ENCODE measurements at regions of chr11 and their contacts with region 1.

Region 1: DNA sequence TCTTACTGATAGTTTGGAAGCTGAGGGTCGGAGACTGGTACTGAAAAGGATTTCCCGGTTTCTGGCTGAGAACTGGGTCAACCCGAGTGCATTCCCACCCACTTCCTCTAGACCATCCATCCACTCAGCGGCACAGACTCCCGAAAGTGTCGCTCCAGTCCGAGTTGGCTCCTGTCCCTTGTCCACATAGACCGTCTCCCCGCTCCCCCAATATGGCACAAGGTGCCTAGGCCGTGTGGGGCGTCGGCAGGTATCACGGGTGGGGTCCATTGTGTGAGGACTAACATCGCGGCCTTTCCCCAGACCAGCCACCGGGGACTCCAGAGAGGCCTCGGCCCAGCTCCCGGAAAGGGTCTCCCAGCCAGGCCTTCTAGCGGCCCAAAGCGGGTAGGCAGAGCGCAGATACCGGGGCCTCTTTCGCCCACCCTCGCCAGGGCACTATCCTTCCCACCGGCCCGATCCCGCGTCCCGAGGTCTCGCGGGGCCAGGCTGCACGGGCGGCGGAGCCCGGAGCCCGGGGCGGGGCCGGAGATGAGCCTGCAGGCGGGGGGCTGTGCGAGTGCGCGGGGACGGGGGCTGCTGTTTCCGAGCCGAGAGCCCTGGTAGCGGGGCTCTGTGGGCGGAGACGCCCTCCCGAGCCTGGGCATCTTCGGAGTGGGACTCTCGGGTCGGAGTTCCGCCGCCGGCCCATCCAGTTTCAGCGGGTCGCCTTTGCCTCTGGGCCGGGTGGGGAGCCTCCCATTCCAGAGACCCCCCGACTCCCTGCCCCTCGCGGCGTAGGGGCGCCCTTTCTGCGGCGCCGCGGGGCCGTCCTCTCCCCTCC is 21.1 kb downstream of the SERPINH1 start:
- DNase-seq: peak; percentile 90 to 93
- H3K4me3 ChIP-seq: peak overlapping the region; percentile 75
- H3K4me3 Mint-ChIP-seq: peak overlapping the region; percentile 79
- H3K27ac Mint-ChIP-seq: peak overlapping the region; percentile 78
- H3K4me1 ChIP-seq: peaks cover 15% of the 10 kb centered on the region
- H3K4me1 Mint-ChIP-seq: peaks cover 21% of the 10 kb centered on the region
- H3K27me3 ChIP-seq: no peaks in the 10 kb centered on the region
- H3K27me3 Mint-ChIP-seq: no peaks in the 10 kb centered on the region
- CTCF ChIP-seq: peak; percentile 50 to 58

Region 2: GRCh38 chr11:75562048-75562835 is 20.9 kb before region 1 on chr11 and contains the start of gene SERPINH1:
- CTCF ChIA-PET with region 1: interaction called, 7 read pairs
- POLR2A ChIA-PET with region 1: interaction called, 14 read pairs
- intact Hi-C with region 1: loop called (anchors 1 kb)
- DNase-seq: peak; percentile 92
- H3K4me3 ChIP-seq: peak within 1 kb of the TSS; percentile 51
- H3K4me3 Mint-ChIP-seq: peak within 1 kb of the TSS; percentile 93
- H3K27ac Mint-ChIP-seq: peak within 1 kb of the TSS; percentile 95
- H3K4me1 ChIP-seq: peaks cover 71% of the 10 kb centered on the region
- H3K4me1 Mint-ChIP-seq: peaks cover 44% of the 10 kb centered on the region
- H3K27me3 ChIP-seq: no peaks in the 10 kb centered on the region
- H3K27me3 Mint-ChIP-seq: no peaks in the 10 kb centered on the region
- CTCF ChIP-seq: no peak
- total RNA-seq, gene SERPINH1: 481 and 528 TPM in 2 replicates

Region 3: GRCh38 chr11:75606099-75606498 is 23.0 kb after region 1 on chr11:
- CTCF ChIA-PET with region 1: no interaction called
- POLR2A ChIA-PET with region 1: no interaction called
- intact Hi-C with region 1: no loop called
- DNase-seq: no peak
- H3K4me3 ChIP-seq: no peak overlapping the region
- H3K4me3 Mint-ChIP-seq: no peak overlapping the region
- H3K27ac Mint-ChIP-seq: no peak overlapping the region
- H3K4me1 ChIP-seq: no peaks in the 10 kb centered on the region
- H3K4me1 Mint-ChIP-seq: no peaks in the 10 kb centered on the region
- H3K27me3 ChIP-seq: no peaks in the 10 kb centered on the region
- H3K27me3 Mint-ChIP-seq: no peaks in the 10 kb centered on the region
- CTCF ChIP-seq: no peak

Region 4: GRCh38 chr11:75777461-75778110 is 194.5 kb after region 1 on chr11:
- CTCF ChIA-PET with region 1: no interaction called
- POLR2A ChIA-PET with region 1: no interaction called
- intact Hi-C with region 1: no loop called
- DNase-seq: no peak
- H3K4me3 ChIP-seq: no peak overlapping the region
- H3K4me3 Mint-ChIP-seq: no peak overlapping the region
- H3K27ac Mint-ChIP-seq: peak overlapping the region; percentile 19
- H3K4me1 ChIP-seq: peaks cover 17% of the 10 kb centered on the region
- H3K4me1 Mint-ChIP-seq: peaks cover 16% of the 10 kb centered on the region
- H3K27me3 ChIP-seq: no peaks in the 10 kb centered on the region
- H3K27me3 Mint-ChIP-seq: no peaks in the 10 kb centered on the region
- CTCF ChIP-seq: no peak